SK-N-SH (cell line): ENCODE measurements at regions of chr21 and their contacts with region 1.

Region 1: GRCh38 chr21:45820171-45821091 is 161.1 kb upstream of the COL6A1 start:
- DNase-seq: peak; percentile 93
- H3K4me3 ChIP-seq: no peak overlapping the region
- H3K27ac ChIP-seq: peak overlapping the region in 1 of 2 experiments; percentile 99; a peak in 2 of 4 replicates
- H3K4me1 ChIP-seq: peaks cover 8 to 35% of the 10 kb centered on the region in 2 experiments; a peak in 2 of 4 replicates
- H3K27me3 ChIP-seq: no peaks in the 10 kb centered on the region
- CTCF ChIP-seq: peak; percentile 82
- EP300 ChIP-seq: peak in 1 of 2 experiments; percentile 44; a peak in 2 of 4 replicates
- RAD21 ChIP-seq: peak; percentile 98

Region 2: GRCh38 chr21:45478115-45478801 is 342.2 kb before region 1 on chr21:
- CTCF ChIA-PET with region 1: interaction called, 13 read pairs
- POLR2A ChIA-PET with region 1: no interaction called
- DNase-seq: peak; percentile 92
- H3K4me3 ChIP-seq: no peak overlapping the region
- H3K27ac ChIP-seq: peak overlapping the region; percentile 10 to 11; a peak in 2 of 4 replicates
- H3K4me1 ChIP-seq: peaks cover 0 to 7% of the 10 kb centered on the region in 2 experiments; a peak in 1 of 4 replicates
- H3K27me3 ChIP-seq: no peaks in the 10 kb centered on the region
- CTCF ChIP-seq: peak; percentile 68
- EP300 ChIP-seq: no peak
- RAD21 ChIP-seq: peak; percentile 67

Region 3: GRCh38 chr21:45570826-45571601 is 249.4 kb before region 1 on chr21:
- CTCF ChIA-PET with region 1: interaction called, 14 read pairs
- POLR2A ChIA-PET with region 1: no interaction called
- DNase-seq: peak; percentile 86
- H3K4me3 ChIP-seq: no peak overlapping the region
- H3K27ac ChIP-seq: peak overlapping the region in 1 of 2 experiments; percentile 96; a peak in 2 of 4 replicates
- H3K4me1 ChIP-seq: peaks cover 0 to 52% of the 10 kb centered on the region in 2 experiments; a peak in 2 of 4 replicates
- H3K27me3 ChIP-seq: 0 out of 2 replicates have a peak, but pooled peaks cover 5% of the 10 kb centered on the region
- CTCF ChIP-seq: no peak
- EP300 ChIP-seq: peak in 1 of 2 experiments; percentile 80; a peak in 2 of 4 replicates
- RAD21 ChIP-seq: no peak

Region 4: DNA sequence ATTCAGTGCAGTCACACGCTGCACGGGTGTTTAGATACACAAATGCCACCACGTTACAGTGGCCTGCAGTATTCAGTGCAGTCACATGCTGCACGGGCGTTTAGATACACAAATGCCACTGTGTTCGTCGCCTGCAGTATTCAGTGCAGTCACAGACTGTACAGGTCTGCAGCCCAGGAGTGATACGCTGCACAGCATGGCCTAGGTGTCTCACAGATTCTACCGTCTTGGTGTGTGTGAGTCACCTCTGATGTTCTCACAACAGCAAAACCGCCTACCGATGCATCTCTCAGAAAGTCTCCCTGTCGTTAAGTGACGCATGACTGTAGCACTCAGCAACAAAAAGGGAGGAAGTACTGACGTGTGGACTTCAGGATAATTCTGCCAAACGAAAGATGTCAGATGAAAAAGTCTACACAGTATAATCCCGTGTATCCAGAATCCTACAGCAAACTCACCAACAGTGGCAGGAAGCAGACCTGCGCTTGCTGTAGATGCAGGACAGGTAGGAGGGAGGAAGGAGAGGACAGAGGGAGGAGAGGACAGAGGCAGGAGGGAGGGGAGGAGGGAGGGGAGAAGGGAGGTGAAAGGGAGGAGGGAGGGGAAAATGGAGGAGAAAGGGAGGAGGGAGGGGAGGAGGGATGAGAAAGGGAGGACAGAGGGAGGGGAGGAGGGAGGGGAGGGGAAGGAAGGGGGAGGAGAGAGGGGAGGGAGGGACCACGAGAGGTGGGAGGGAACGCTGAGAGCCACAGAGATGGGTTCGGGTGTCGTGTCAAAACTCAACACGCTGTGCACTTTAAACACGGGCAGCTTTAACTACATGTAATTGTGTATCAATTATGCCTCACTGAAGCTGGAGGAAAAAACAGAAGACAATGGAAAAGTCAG is 213.2 kb before region 1 on chr21:
- CTCF ChIA-PET with region 1: interaction called, 10 read pairs
- POLR2A ChIA-PET with region 1: no interaction called
- DNase-seq: peak; percentile 63
- H3K4me3 ChIP-seq: peak overlapping the region; percentile 26 to 53; a peak in 3 of 4 replicates
- H3K27ac ChIP-seq: no peak overlapping the region
- H3K4me1 ChIP-seq: peaks cover 2 to 11% of the 10 kb centered on the region in 2 experiments; a peak in 2 of 4 replicates
- H3K27me3 ChIP-seq: peaks cover 19% of the 10 kb centered on the region
- CTCF ChIP-seq: no peak
- EP300 ChIP-seq: no peak
- RAD21 ChIP-seq: no peak

Region 5: GRCh38 chr21:45740516-45741357 is 79.7 kb before region 1 on chr21:
- CTCF ChIA-PET with region 1: interaction called, 12 read pairs
- POLR2A ChIA-PET with region 1: no interaction called
- DNase-seq: no peak
- H3K4me3 ChIP-seq: no peak overlapping the region
- H3K27ac ChIP-seq: no peak overlapping the region; a peak in 1 of 4 replicates
- H3K4me1 ChIP-seq: peaks cover 15 to 56% of the 10 kb centered on the region in 2 experiments; a peak in 3 of 4 replicates
- H3K27me3 ChIP-seq: no peaks in the 10 kb centered on the region
- CTCF ChIP-seq: no peak
- EP300 ChIP-seq: no peak
- RAD21 ChIP-seq: peak; percentile 23; the same call in 1 of the 2 replicates

Region 6: GRCh38 chr21:45768751-45769070 is 51.7 kb before region 1 on chr21:
- CTCF ChIA-PET with region 1: interaction called, 10 read pairs
- POLR2A ChIA-PET with region 1: no interaction called
- DNase-seq: peak; percentile 71
- H3K4me3 ChIP-seq: no peak overlapping the region
- H3K27ac ChIP-seq: peak overlapping the region; percentile 61 to 95; a peak in 3 of 4 replicates
- H3K4me1 ChIP-seq: peaks cover 22 to 53% of the 10 kb centered on the region in 2 experiments
- H3K27me3 ChIP-seq: no peaks in the 10 kb centered on the region
- CTCF ChIP-seq: peak; percentile 38; the same call in 1 of the 2 replicates
- EP300 ChIP-seq: no peak
- RAD21 ChIP-seq: peak; percentile 71

Region 7: GRCh38 chr21:45887120-45887611 is 66.7 kb after region 1 on chr21:
- CTCF ChIA-PET with region 1: interaction called, 10 read pairs
- POLR2A ChIA-PET with region 1: no interaction called
- DNase-seq: peak; percentile 85
- H3K4me3 ChIP-seq: no peak overlapping the region
- H3K27ac ChIP-seq: peak overlapping the region in 1 of 2 experiments; percentile 96; a peak in 2 of 4 replicates
- H3K4me1 ChIP-seq: peaks cover 0 to 56% of the 10 kb centered on the region in 2 experiments; a peak in 2 of 4 replicates
- H3K27me3 ChIP-seq: no peaks in the 10 kb centered on the region
- CTCF ChIP-seq: no peak
- EP300 ChIP-seq: no peak
- RAD21 ChIP-seq: 0 out of 2 replicates have a peak, but pooled peaks have one; percentile 10

Region 8: DNA sequence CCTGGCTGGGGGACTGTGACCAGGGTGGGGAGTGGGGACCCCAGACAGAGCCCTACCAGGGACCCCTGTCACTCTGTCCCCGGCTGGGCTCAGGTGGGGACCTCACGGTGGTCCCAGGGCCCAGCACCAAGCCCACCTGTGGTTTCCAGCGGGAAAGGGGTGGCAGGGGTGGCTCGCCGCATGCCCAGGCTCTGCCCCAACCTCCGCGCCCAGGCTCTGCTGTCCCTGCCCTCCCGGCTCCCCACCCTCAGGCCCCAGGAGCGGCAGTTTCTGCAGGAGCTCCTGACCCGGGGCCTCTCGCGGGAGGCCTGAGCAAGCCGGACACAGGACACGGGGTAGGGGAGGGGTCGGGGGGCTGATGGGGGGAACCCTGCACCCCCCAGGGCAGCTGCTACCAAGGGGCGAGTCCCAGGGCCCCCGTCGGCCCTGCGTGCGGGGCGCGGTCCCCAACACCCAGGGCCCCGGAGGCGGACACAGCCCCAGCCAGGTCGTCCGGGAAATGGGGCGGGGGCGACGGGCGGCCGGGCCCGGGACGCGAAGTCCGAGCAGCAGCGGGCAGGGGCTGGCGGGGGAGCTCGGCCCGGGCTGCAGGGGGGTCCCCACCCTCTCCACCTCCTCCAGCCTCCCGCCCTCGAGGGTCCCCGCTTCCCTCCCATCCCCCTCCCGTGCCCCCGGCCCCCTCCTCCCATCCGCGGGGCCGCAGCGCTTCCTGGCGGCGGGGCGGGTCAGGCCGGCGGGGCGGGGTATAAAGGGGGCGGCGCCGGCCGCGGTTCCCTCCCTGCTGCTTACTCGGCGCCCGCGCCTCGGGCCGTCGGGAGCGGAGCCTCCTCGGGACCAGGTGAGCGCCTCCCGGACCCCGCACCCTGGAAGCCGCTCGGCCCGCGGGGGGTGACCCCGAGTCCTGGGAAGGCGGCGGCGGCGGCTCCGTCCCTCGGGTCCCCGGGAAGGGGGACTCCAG is 277.2 kb after region 1 on chr21 and contains the start of gene COL6A2:
- CTCF ChIA-PET with region 1: no interaction called
- POLR2A ChIA-PET with region 1: no interaction called
- DNase-seq: peak; percentile 97
- H3K4me3 ChIP-seq: peak within 1 kb of the TSS; percentile 66 to 67
- H3K27ac ChIP-seq: peak within 1 kb of the TSS in 1 of 2 experiments; percentile 59; a peak in 1 of 4 replicates
- H3K4me1 ChIP-seq: peaks cover 0 to 6% of the 10 kb centered on the region in 2 experiments; a peak in 1 of 4 replicates
- H3K27me3 ChIP-seq: no peaks in the 10 kb centered on the region
- CTCF ChIP-seq: peak; percentile 30
- EP300 ChIP-seq: no peak
- RAD21 ChIP-seq: peak; percentile 21; the same call in 1 of the 2 replicates
- polyA plus RNA-seq, gene COL6A2: 66.6 and 108 TPM in 2 replicates